Naive thymus-derived CD4-positive, alpha-beta T cell (primary cell): ENCODE measurements at regions of chr4 and their contacts with region 1.

Region 1: DNA sequence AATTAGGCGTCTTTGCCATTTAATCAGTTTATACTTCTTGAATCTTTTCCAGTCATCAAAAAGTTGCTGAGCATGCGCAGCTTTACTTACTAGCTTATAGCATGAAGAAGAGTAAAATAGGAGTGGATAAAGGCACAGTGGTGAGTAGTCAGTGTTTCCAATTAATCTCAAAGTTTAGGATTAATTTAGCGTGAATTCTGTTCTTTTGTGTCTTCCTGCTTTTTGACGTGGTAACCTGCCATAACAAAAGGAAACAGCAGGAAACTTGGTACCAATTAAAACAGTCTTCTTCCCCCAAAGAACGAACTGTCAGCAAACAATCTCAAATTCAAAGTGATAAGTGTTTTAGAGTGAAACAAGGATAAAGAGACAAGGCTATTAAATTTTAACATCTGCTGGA is 61.9 kb downstream of the TET2 start:
- DNase-seq: no peak
- ATAC-seq: no peak
- H3K4me3 ChIP-seq: no peak overlapping the region
- H3K4me3 Mint-ChIP-seq: no peak overlapping the region
- H3K27ac ChIP-seq: no peak overlapping the region
- H3K27ac Mint-ChIP-seq: no peak overlapping the region
- H3K4me1 ChIP-seq: no peaks in the 10 kb centered on the region
- H3K4me1 Mint-ChIP-seq: peaks cover 3 to 37% (median 9%) of the 10 kb centered on the region in 7 donors
- H3K27me3 ChIP-seq: no peaks in the 10 kb centered on the region
- H3K27me3 Mint-ChIP-seq: no peaks in the 10 kb centered on the region

Region 2: GRCh38 chr4:105225500-105225899 is 16.9 kb after region 1 on chr4:
- CTCF ChIA-PET with region 1: interaction called, 3 read pairs
- POLR2A ChIA-PET with region 1: no interaction called
- intact Hi-C with region 1: loop called in 1 of 2 experiments (anchors 2 kb)
- DNase-seq: no peak
- ATAC-seq: no peak
- H3K4me3 ChIP-seq: no peak overlapping the region
- H3K4me3 Mint-ChIP-seq: no peak overlapping the region
- H3K27ac ChIP-seq: no peak overlapping the region
- H3K27ac Mint-ChIP-seq: peak overlapping the region in 1 of 9 donors; percentile 4
- H3K4me1 ChIP-seq: no peaks in the 10 kb centered on the region
- H3K4me1 Mint-ChIP-seq: peaks cover 5 to 28% (median 17%) of the 10 kb centered on the region in 7 donors
- H3K27me3 ChIP-seq: no peaks in the 10 kb centered on the region
- H3K27me3 Mint-ChIP-seq: no peaks in the 10 kb centered on the region